ENCODE measurements at regions of chr2 and their contacts with region 1.

Region 1: DNA sequence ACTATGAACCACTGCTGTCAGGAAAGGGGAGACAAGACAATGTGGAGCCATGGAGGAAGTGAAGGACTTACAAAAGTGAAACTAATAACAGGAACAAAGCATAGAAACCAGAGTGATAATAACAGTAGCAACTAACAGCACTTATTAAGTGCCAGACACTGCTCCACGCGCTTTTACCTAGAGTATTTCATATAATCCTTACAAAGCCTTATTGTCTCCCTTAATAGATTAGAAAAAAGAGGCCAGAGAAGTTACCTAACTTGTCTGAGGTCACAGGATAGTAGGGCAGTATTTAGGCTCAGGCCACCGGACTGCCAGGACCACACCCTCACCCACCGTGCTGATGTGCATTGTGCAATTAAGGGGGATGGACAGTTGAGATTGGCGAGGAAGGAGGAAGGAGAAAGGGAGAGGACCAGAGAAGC is 98.6 kb upstream of the NFU1 start:
- DNase-seq: peak in 1 of 2 experiments; percentile 4
- H3K4me3 ChIP-seq: no peak overlapping the region
- H3K27ac ChIP-seq: no peak overlapping the region
- H3K4me1 ChIP-seq: peaks cover 38% of the 10 kb centered on the region
- H3K27me3 ChIP-seq: no peaks in the 10 kb centered on the region
- CTCF ChIP-seq: no peak

Region 2: DNA sequence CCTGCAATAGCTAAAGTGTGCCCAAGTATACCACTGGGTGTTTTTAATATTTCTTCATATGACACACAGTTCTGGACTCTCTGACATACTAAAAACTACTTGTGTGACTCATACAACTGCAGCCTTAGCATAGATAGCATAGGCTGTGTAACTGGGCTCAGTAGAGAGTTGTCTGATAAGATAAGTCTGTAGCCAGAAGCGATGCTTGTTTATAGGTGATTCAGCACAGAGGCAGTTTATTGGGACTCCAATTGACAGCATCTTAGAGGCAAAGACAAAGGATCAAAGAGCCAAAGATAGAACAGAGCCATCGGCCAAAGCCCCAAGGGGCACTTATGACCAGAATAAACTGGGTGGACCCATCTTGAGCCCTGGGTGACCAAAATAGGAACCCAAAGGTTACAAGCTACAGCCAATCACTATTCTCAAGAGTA is 65.4 kb after region 1 on chr2:
- CTCF ChIA-PET with region 1: no interaction called
- POLR2A ChIA-PET with region 1: no interaction called
- intact Hi-C with region 1: no loop called
- DNase-seq: peak; percentile 2 to 94
- H3K4me3 ChIP-seq: no peak overlapping the region
- H3K27ac ChIP-seq: peak overlapping the region; percentile 30
- H3K4me1 ChIP-seq: peaks cover 33% of the 10 kb centered on the region
- H3K27me3 ChIP-seq: no peaks in the 10 kb centered on the region
- CTCF ChIP-seq: no peak

Region 3: DNA sequence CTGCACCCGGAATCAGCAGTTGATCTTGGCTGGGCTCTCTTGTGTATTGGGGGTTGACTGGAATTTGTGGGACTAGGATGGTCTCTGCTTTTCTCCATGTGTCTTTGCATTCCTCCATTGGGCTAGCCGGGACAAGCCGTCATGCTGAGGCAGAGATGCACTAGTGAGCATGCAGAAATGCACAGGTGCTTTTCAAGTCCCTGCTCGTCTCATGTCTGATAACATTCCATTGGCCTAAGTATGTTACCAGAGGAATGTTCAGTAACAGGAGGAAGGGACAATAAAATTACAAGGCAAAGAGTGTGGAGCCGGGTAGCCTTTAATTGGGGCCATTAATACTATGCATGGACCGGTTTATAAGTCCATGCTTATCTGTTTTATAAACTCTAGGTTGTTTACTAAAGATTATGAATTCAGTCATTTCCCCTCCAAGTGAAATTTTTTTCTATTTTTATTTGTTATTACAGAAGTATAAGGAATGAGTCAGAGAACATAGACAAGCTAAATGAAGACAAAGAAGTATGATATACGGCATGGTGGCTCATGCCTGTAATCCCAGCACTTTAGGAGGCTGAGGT is 132.1 kb after region 1 on chr2:
- CTCF ChIA-PET with region 1: no interaction called
- POLR2A ChIA-PET with region 1: interaction called, 14 read pairs
- intact Hi-C with region 1: no loop called
- DNase-seq: no peak
- H3K4me3 ChIP-seq: no peak overlapping the region
- H3K27ac ChIP-seq: no peak overlapping the region
- H3K4me1 ChIP-seq: no peaks in the 10 kb centered on the region
- H3K27me3 ChIP-seq: no peaks in the 10 kb centered on the region
- CTCF ChIP-seq: no peak